ENCODE measurements at regions of chr16 and their contacts with region 1.

Region 1: GRCh38 chr16:10509534-10510025 is 70.8 kb downstream of the EMP2 start:
- DNase-seq: no peak
- ATAC-seq: peak; percentile 96
- H3K4me3 Mint-ChIP-seq: no peak overlapping the region
- H3K27ac Mint-ChIP-seq: peak overlapping the region; percentile 19
- H3K4me1 Mint-ChIP-seq: peaks cover 17% of the 10 kb centered on the region
- H3K27me3 Mint-ChIP-seq: no peaks in the 10 kb centered on the region
- CTCF ChIP-seq: peak; percentile 58

Region 2: GRCh38 chr16:9258423-9259051 is 1251.0 kb before region 1 on chr16:
- CTCF ChIA-PET with region 1: no interaction called
- POLR2A ChIA-PET with region 1: no interaction called
- intact Hi-C with region 1: loop called (anchors 1 kb)
- DNase-seq: no peak
- ATAC-seq: no peak
- H3K4me3 Mint-ChIP-seq: no peak overlapping the region
- H3K27ac Mint-ChIP-seq: no peak overlapping the region
- H3K4me1 Mint-ChIP-seq: no peaks in the 10 kb centered on the region
- H3K27me3 Mint-ChIP-seq: peaks cover 27% of the 10 kb centered on the region
- CTCF ChIP-seq: no peak

Region 3: GRCh38 chr16:10181196-10182162 is 328.1 kb before region 1 on chr16:
- CTCF ChIA-PET with region 1: no interaction called
- POLR2A ChIA-PET with region 1: no interaction called
- intact Hi-C with region 1: loop called (anchors 2 kb)
- DNase-seq: peak; percentile 59
- ATAC-seq: peak; percentile 46
- H3K4me3 Mint-ChIP-seq: peak overlapping the region; percentile 78
- H3K27ac Mint-ChIP-seq: no peak overlapping the region
- H3K4me1 Mint-ChIP-seq: peaks cover 24% of the 10 kb centered on the region
- H3K27me3 Mint-ChIP-seq: peaks cover 57% of the 10 kb centered on the region
- CTCF ChIP-seq: peak; percentile 54

Region 4: DNA sequence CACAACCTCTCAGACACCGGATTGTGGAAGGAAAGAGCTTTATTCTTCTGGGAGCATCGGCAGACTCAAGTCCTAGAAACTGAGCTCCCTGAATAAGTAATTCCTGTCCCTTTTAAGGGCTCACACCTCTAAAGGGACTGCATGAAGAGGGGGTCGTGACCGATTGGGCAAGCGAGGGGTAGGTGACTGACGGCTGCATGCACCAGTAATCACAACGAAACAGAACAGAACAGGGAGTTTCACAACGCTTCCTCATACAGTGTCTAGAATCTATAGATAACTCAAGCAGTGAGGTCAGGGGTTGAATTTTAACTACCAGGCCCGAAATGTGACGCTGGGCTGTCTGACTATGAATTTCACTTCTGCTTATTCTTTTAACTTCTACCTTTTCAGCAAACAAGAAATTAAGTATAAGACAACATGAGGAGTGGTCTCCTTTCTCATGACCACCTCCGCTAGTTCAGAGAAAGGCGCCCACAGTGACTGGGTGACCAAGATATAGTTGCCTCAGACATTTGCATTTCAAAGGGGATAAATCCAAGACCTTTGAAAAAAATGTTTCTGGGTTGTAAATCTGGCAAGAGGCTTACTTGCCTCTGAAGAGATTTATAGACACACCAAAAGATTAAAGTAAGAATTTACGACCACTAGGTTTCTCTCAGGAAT is 212.1 kb before region 1 on chr16:
- CTCF ChIA-PET with region 1: interaction called, 4 read pairs
- POLR2A ChIA-PET with region 1: no interaction called
- intact Hi-C with region 1: loop called (anchors 1 kb)
- DNase-seq: peak; percentile 43
- ATAC-seq: peak; percentile 94
- H3K4me3 Mint-ChIP-seq: peak overlapping the region; percentile 69
- H3K27ac Mint-ChIP-seq: peak overlapping the region; percentile 97
- H3K4me1 Mint-ChIP-seq: peaks cover 62% of the 10 kb centered on the region
- H3K27me3 Mint-ChIP-seq: no peaks in the 10 kb centered on the region
- CTCF ChIP-seq: no peak

Region 5: GRCh38 chr16:10332241-10332640 is 177.3 kb before region 1 on chr16:
- CTCF ChIA-PET with region 1: no interaction called
- POLR2A ChIA-PET with region 1: no interaction called
- intact Hi-C with region 1: no loop called
- DNase-seq: no peak
- ATAC-seq: no peak
- H3K4me3 Mint-ChIP-seq: no peak overlapping the region
- H3K27ac Mint-ChIP-seq: peak overlapping the region; percentile 46
- H3K4me1 Mint-ChIP-seq: peaks cover 40% of the 10 kb centered on the region
- H3K27me3 Mint-ChIP-seq: no peaks in the 10 kb centered on the region
- CTCF ChIP-seq: no peak

Region 6: DNA sequence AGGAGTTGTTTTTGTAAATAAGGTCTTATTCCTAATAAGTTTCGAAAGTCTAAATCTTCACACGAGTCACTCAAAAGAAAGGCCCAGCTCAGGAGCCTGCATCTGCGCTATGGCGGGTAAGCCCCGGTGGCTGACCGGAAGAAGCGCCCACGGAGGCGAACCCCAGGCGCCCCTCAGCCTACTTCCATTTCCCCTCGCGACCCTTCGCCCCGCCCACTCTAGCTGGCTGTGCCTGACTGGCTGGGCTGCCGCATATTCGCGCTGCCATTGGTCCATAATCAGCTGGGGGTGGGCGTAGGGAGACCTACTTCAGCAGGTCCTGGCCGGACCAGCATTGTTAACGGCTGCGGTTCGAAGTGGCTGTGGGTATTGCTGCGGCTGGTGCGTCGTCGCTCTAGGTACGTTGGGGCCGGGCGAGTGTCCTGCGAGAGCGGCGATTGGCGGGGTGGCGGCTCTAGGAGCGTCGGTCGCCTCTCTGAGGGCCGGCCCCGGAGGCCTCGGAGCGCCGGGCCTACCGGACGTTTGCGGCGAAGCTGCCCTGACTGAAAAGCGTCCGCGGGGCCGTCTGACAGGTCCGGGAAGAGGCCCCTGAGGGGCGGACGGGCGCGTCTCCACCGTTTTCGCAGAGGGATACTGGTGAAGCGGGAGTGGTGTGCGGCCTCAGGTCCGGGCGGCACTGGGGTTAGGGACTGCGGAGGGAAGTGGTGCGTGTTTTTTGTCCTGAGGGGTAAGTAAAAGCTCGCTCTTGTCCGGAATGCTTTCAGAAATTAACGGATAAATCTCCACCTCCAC is 123.7 kb before region 1 on chr16 and contains the start of gene ATF7IP2:
- CTCF ChIA-PET with region 1: no interaction called
- POLR2A ChIA-PET with region 1: no interaction called
- intact Hi-C with region 1: loop called (anchors 10 kb)
- DNase-seq: peak; percentile 86
- ATAC-seq: peak; percentile 99
- H3K4me3 Mint-ChIP-seq: peak within 1 kb of the TSS; percentile 99
- H3K27ac Mint-ChIP-seq: peak within 1 kb of the TSS; percentile 96
- H3K4me1 Mint-ChIP-seq: peaks cover 49% of the 10 kb centered on the region
- H3K27me3 Mint-ChIP-seq: no peaks in the 10 kb centered on the region
- CTCF ChIP-seq: no peak
- total RNA-seq, gene ATF7IP2: 48.6 and 55.9 TPM in 2 replicates

Region 7: GRCh38 chr16:10631886-10632285 is 122.3 kb after region 1 on chr16:
- CTCF ChIA-PET with region 1: no interaction called
- POLR2A ChIA-PET with region 1: no interaction called
- intact Hi-C with region 1: no loop called
- DNase-seq: no peak
- ATAC-seq: no peak
- H3K4me3 Mint-ChIP-seq: no peak overlapping the region
- H3K27ac Mint-ChIP-seq: no peak overlapping the region
- H3K4me1 Mint-ChIP-seq: peaks cover 2% of the 10 kb centered on the region
- H3K27me3 Mint-ChIP-seq: peaks cover 18% of the 10 kb centered on the region
- CTCF ChIP-seq: no peak

Region 8: GRCh38 chr16:10737068-10737625 is 227.6 kb after region 1 on chr16:
- CTCF ChIA-PET with region 1: interaction called, 137 read pairs
- POLR2A ChIA-PET with region 1: interaction called, 31 read pairs
- intact Hi-C with region 1: loop called (anchors 1 kb)
- DNase-seq: no peak
- ATAC-seq: peak; percentile 65
- H3K4me3 Mint-ChIP-seq: peak overlapping the region; percentile 68
- H3K27ac Mint-ChIP-seq: peak overlapping the region; percentile 90
- H3K4me1 Mint-ChIP-seq: peaks cover 51% of the 10 kb centered on the region
- H3K27me3 Mint-ChIP-seq: no peaks in the 10 kb centered on the region
- CTCF ChIP-seq: peak; percentile 60